Mammary epithelial cell (primary cell): ENCODE measurements at regions of chr5 and their contacts with region 1.

Region 1: DNA sequence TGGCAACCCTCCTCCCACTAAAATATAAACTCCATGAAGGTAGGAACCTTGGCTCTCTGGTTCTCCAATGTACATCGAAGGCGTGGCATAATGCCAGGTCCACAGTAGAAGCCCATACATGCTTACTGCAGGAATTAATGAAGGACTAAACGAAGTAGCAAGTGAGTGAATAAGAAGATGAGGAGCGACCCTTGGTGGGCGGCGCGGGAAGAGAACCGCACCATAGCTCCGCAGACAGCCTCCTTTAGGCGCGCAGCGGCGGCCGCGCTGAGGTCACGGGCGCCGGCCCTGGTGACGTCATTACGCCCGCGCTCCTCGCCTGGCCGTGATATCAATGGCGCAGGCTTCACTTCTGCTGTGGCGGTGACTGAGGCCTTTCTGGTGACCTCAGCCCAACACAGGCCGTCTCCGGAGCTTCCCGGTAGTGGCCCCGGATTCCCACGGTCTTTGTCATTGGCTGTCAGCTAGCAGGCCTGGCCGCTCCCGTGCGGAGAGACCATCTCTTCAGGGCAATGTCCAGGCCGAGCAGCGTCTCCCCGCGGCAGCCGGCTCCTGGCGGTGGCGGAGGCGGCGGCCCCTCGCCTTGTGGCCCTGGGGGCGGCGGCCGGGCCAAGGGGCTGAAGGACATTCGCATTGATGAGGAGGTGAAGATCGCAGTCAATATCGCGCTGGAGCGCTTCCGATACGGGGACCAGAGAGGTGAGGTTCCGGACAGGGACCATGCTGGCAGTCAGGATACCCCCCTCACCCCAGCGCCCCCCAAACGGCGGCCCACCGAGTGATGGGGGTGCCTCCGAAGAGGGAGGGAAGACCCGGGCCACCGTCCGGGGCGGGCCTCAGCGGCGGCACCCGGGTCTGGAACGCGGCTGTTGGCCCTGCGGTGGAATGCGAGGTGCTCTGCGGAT is at the start of gene YTHDC2:
- DNase-seq: peak; percentile 79
- H3K4me3 ChIP-seq: peak within 1 kb of the TSS; percentile 68 to 79 (median 75)
- H3K27ac ChIP-seq: peak within 1 kb of the TSS; percentile 88
- H3K4me1 ChIP-seq: peaks cover 26% of the 10 kb centered on the region
- H3K27me3 ChIP-seq: no peaks in the 10 kb centered on the region
- CTCF ChIP-seq: peak; percentile 7 to 19
- total RNA-seq, gene YTHDC2: 31.3 to 32.1 TPM

Region 2: GRCh38 chr5:112976432-112977309 is 537.0 kb before region 1 on chr5 and contains the start of gene DCP2:
- CTCF ChIA-PET with region 1: no interaction called
- dilution Hi-C with region 1: no loop called
- in situ Hi-C with region 1: loop called in 1 of 2 experiments (anchors 25 kb)
- intact Hi-C with region 1: no loop called
- DNase-seq: peak; percentile 98
- H3K4me3 ChIP-seq: peak within 1 kb of the TSS; percentile 75 to 100 (median 88)
- H3K27ac ChIP-seq: peak within 1 kb of the TSS; percentile 80
- H3K4me1 ChIP-seq: peaks cover 20% of the 10 kb centered on the region
- H3K27me3 ChIP-seq: no peaks in the 10 kb centered on the region
- CTCF ChIP-seq: no peak
- total RNA-seq, gene DCP2: 28.3 to 31.7 TPM

Region 3: DNA sequence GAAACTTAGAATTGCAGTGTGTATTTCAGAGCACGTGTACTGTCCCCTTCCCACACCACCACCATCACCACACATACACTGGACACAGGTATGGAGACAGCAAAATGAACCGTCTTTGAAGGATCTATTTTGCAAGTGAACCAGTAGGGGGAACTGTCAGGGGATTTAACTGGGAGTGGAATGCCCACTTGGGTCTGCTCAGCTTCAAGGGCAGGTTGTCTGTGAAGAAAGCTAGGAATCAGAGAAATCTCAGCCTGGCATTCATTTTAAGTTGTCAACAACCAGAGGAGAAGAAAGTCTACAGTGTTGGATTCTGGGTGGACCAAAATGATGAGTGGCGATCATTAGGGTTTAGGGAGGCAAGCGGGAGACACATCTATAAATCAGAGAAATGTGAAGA is 390.0 kb before region 1 on chr5:
- CTCF ChIA-PET with region 1: no interaction called
- dilution Hi-C with region 1: no loop called
- in situ Hi-C with region 1: no loop called
- intact Hi-C with region 1: loop called (anchors 1 kb)
- DNase-seq: no peak
- H3K4me3 ChIP-seq: no peak overlapping the region
- H3K27ac ChIP-seq: no peak overlapping the region
- H3K4me1 ChIP-seq: peaks cover 25% of the 10 kb centered on the region
- H3K27me3 ChIP-seq: no peaks in the 10 kb centered on the region
- CTCF ChIP-seq: peak; percentile 1 to 3

Region 4: DNA sequence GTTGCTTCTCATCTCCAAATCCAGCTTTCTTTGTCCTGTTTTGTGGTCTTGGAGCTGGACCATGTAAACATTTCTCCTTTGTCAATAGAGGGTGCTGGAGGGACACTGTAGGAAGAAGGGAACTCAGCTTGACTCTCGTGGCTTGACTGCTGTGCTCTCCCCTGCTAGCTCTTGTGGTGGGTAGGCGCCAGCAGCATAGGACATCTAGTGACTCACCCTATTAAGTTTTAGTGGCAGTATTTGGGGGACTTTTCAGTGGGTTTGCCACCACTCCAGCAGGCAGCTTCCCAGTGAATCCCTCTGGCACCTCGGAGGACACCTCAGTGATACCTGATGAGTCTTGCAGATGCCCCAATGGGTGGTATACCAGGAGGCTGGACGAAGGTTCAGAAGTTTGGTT is 176.7 kb before region 1 on chr5:
- CTCF ChIA-PET with region 1: interaction called, 11 read pairs
- dilution Hi-C with region 1: no loop called
- in situ Hi-C with region 1: loop called in 1 of 2 experiments (anchors 10 kb)
- intact Hi-C with region 1: loop called (anchors 1 kb)
- DNase-seq: peak; percentile 58
- H3K4me3 ChIP-seq: no peak overlapping the region
- H3K27ac ChIP-seq: no peak overlapping the region
- H3K4me1 ChIP-seq: no peaks in the 10 kb centered on the region
- H3K27me3 ChIP-seq: no peaks in the 10 kb centered on the region
- CTCF ChIP-seq: peak; percentile 38 to 59

Region 5: DNA sequence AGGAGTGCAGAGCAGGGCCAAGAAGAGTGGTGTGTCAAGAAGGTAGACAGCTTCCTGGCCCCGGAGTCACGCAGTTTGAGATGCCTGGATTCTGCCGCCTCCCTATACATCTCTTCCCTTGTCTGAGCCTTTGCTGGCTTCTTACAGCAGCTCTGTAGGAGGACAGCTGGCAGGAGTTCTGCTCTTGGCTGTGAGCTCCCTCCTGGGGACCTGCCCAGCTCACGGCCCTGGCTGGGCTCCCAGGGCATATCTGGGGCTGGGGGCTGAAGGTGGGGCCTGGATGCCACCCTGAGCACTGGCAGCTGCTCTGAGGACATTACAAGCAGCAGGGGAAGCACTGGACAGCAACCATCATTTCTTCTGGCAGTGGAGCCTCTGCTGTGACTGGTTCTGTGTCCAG is 78.1 kb before region 1 on chr5:
- CTCF ChIA-PET with region 1: no interaction called
- dilution Hi-C with region 1: no loop called
- in situ Hi-C with region 1: no loop called
- intact Hi-C with region 1: no loop called
- DNase-seq: no peak
- H3K4me3 ChIP-seq: no peak overlapping the region
- H3K27ac ChIP-seq: no peak overlapping the region
- H3K4me1 ChIP-seq: no peaks in the 10 kb centered on the region
- H3K27me3 ChIP-seq: no peaks in the 10 kb centered on the region
- CTCF ChIP-seq: no peak

Region 6: GRCh38 chr5:113487781-113488644 is 25.6 kb before region 1 on chr5 and contains the start of gene MCC:
- CTCF ChIA-PET with region 1: no interaction called
- dilution Hi-C with region 1: no loop called
- in situ Hi-C with region 1: no loop called
- intact Hi-C with region 1: loop called (anchors 1 kb)
- DNase-seq: peak; percentile 93
- H3K4me3 ChIP-seq: peak within 1 kb of the TSS; percentile 52 to 88 (median 75)
- H3K27ac ChIP-seq: peak within 1 kb of the TSS; percentile 74
- H3K4me1 ChIP-seq: peaks cover 19% of the 10 kb centered on the region
- H3K27me3 ChIP-seq: no peaks in the 10 kb centered on the region
- CTCF ChIP-seq: no peak
- total RNA-seq, gene MCC: 46.2 to 77.3 TPM

Region 7: GRCh38 chr5:113574417-113574816 is 60.8 kb after region 1 on chr5:
- CTCF ChIA-PET with region 1: no interaction called
- dilution Hi-C with region 1: no loop called
- in situ Hi-C with region 1: no loop called
- intact Hi-C with region 1: no loop called
- DNase-seq: peak; percentile 74
- H3K4me3 ChIP-seq: no peak overlapping the region
- H3K27ac ChIP-seq: no peak overlapping the region
- H3K4me1 ChIP-seq: peaks cover 11% of the 10 kb centered on the region
- H3K27me3 ChIP-seq: no peaks in the 10 kb centered on the region
- CTCF ChIP-seq: no peak